Dendritic cell treated with granulocyte-macrophage colony-stimulating factor and Interleukin-4, amounts not matched to agents 40 ng/mL and 50 ng/mL, for 4 days (primary cell): ENCODE measurements at regions of chr4 and their contacts with region 1.

Region 1: DNA sequence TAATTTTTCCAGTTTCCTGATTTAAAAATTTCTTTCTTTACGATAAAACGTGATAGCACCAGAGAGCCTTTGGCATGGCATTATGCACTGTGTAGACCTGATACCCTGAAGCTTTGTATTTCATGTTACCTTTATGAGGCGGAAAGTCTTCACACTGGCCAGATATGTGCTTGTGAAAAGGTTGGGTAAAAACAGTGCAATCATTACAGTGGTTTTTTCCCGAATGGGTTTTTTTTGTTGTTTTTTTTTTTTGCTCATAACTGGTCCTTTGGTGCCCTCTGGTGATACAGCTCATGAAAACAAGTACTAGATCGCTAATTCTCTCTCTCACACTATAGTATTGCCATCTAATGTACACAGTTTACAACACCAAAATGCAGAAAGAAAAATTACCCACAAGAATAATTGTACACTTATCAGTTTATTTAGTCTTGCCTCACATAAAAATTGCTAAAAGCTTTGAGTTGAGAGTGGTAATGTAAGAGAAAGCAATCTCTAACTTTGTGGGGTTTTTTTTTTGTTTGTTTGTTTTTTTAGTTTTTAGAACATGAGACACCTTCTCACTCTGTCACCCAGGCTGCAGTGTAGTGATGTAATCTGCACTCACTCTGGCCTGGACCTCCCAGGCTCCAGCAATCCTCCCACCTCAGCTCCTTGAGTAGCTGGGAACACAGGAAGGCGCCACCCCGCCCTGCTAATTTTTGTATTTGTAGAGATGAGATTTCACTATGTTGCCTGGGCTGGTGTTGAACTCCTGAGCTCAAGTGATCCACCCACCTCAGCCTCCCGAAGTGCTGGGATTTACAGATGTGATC is 21.3 kb downstream of the SPCS3 start:
- H3K4me3 Mint-ChIP-seq: no peak overlapping the region
- H3K27ac Mint-ChIP-seq: no peak overlapping the region
- H3K4me1 Mint-ChIP-seq: no peaks in the 10 kb centered on the region
- H3K27me3 Mint-ChIP-seq: no peaks in the 10 kb centered on the region

Region 2: GRCh38 chr4:174764105-174764729 is 1576.9 kb before region 1 on chr4:
- intact Hi-C with region 1: loop called (anchors 10 kb)
- H3K4me3 Mint-ChIP-seq: no peak overlapping the region
- H3K27ac Mint-ChIP-seq: no peak overlapping the region
- H3K4me1 Mint-ChIP-seq: no peaks in the 10 kb centered on the region
- H3K27me3 Mint-ChIP-seq: no peaks in the 10 kb centered on the region

Region 3: DNA sequence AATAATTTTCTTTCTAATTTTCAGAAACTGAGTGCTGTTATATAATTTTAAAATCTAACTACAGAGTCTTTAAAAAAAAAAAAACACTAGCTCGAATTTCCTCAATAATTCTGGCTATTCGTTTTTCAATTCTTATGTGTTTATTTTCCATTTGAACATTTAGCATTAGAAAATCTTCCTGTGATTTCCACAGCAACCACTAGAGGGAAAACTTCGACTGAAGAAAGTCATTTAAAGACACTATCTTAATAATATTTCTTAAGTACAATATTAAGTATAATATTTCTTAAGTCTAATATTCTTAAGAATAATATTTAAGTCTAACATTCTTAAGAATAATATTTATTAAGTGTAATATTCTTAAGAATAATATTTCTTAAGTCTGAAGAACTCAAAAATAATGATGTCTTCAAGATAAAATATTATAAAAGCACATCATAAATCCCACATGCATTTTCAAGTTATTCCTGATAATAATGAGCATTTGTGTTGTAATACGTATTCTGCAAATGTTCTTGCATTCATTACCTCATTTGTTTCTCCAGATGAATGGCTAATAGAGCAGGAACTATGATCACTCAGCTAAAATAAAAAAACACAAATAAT is 393.9 kb before region 1 on chr4:
- intact Hi-C with region 1: loop called (anchors 2 kb)
- H3K4me3 Mint-ChIP-seq: peak overlapping the region; percentile 58
- H3K27ac Mint-ChIP-seq: peak overlapping the region; percentile 61
- H3K4me1 Mint-ChIP-seq: peaks cover 7% of the 10 kb centered on the region
- H3K27me3 Mint-ChIP-seq: no peaks in the 10 kb centered on the region

Region 4: GRCh38 chr4:176034499-176034898 is 306.6 kb before region 1 on chr4:
- intact Hi-C with region 1: loop called (anchors 1 kb)
- H3K4me3 Mint-ChIP-seq: no peak overlapping the region
- H3K27ac Mint-ChIP-seq: no peak overlapping the region
- H3K4me1 Mint-ChIP-seq: no peaks in the 10 kb centered on the region
- H3K27me3 Mint-ChIP-seq: no peaks in the 10 kb centered on the region

Region 5: DNA sequence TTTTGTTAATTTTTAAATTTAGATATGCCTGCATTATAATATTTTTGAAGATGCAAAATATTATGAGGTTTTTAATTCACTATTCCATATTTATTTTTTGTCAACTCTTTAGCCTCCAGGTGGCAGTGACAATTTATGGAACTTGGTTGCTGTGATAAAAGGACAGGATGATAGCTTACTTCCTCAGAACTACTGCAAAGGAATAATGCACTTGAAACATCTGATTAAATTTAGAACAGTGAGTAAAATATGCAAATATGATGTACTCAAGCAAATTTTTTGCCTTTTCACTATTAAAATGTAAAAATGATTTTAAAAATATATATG is 190.8 kb before region 1 on chr4:
- intact Hi-C with region 1: loop called (anchors 1 kb)
- H3K4me3 Mint-ChIP-seq: no peak overlapping the region
- H3K27ac Mint-ChIP-seq: no peak overlapping the region
- H3K4me1 Mint-ChIP-seq: no peaks in the 10 kb centered on the region
- H3K27me3 Mint-ChIP-seq: no peaks in the 10 kb centered on the region